ENCODE measurements at regions of chr7 and their contacts with region 1.

Region 1: DNA sequence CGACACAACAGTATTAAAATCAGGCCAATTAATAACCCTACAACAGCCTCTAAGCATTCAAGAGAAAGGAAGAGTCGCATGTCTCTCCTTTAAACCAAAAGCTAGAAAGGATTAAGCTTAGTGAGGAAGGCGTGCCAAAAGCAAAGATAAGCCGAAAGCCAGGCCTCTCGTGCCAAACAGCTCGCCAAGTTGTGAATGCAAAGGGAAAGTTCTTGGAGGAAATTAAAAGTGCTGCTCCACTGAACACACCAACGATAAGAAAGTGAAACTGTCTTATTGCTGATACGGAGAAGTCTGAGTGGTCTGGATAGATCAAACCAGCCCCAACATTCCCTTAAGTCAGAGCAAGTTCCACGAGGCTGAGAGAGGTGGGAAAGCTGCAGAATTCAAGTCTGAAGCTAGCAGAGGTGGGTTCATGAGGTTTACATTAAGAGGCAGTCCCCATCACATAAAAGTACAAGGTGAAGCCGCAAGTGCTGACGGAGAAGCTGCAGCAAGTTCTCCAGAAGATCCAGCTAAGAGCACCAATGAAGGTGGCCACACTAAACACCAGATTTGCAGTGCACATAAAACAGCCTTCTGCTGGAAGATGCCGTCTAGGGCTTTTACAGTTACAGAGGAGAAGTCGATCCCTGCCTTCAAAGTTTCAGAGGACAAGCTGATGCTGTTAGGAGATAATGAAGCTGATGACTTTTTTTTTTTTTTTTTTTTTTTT is 194.8 kb downstream of the MAD1L1 start:
- DNase-seq: peak in 7 of 14 experiments; percentile 14 to 57 (median 31)
- ATAC-seq: peak; percentile 41
- H3K4me3 ChIP-seq: peak overlapping the region; percentile 65
- H3K4me3 Mint-ChIP-seq: peak overlapping the region; percentile 80
- H3K27ac ChIP-seq: peak overlapping the region; percentile 23 to 58
- H3K27ac Mint-ChIP-seq: peak overlapping the region; percentile 86
- H3K4me1 ChIP-seq: peaks cover 34% of the 10 kb centered on the region
- H3K4me1 Mint-ChIP-seq: peaks cover 66% of the 10 kb centered on the region
- H3K27me3 ChIP-seq: no peaks in the 10 kb centered on the region
- H3K27me3 Mint-ChIP-seq: no peaks in the 10 kb centered on the region
- CTCF ChIP-seq: no peak

Region 2: GRCh38 chr7:1979591-1980560 is 58.1 kb before region 1 on chr7:
- CTCF ChIA-PET with region 1: no interaction called
- POLR2A ChIA-PET with region 1: interaction called, 3 read pairs
- intact Hi-C with region 1: loop called in 1 of 2 experiments (anchors 10 kb)
- DNase-seq: no peak
- ATAC-seq: no peak
- H3K4me3 ChIP-seq: no peak overlapping the region
- H3K4me3 Mint-ChIP-seq: no peak overlapping the region
- H3K27ac ChIP-seq: no peak overlapping the region
- H3K27ac Mint-ChIP-seq: no peak overlapping the region
- H3K4me1 ChIP-seq: peaks cover 4% of the 10 kb centered on the region
- H3K4me1 Mint-ChIP-seq: peaks cover 29% of the 10 kb centered on the region
- H3K27me3 ChIP-seq: no peaks in the 10 kb centered on the region
- H3K27me3 Mint-ChIP-seq: no peaks in the 10 kb centered on the region
- CTCF ChIP-seq: no peak

Region 3: GRCh38 chr7:2019607-2020511 is 18.1 kb before region 1 on chr7:
- CTCF ChIA-PET with region 1: no interaction called
- POLR2A ChIA-PET with region 1: interaction called, 5 read pairs
- intact Hi-C with region 1: loop called in 1 of 2 experiments (anchors 1 kb)
- DNase-seq: peak in 9 of 14 experiments; percentile 13 to 77 (median 49)
- ATAC-seq: peak; percentile 91
- H3K4me3 ChIP-seq: peak overlapping the region; percentile 24
- H3K4me3 Mint-ChIP-seq: peak overlapping the region; percentile 49
- H3K27ac ChIP-seq: peak overlapping the region in 1 of 2 donors; percentile 51
- H3K27ac Mint-ChIP-seq: peak overlapping the region; percentile 81
- H3K4me1 ChIP-seq: peaks cover 15% of the 10 kb centered on the region
- H3K4me1 Mint-ChIP-seq: peaks cover 17% of the 10 kb centered on the region
- H3K27me3 ChIP-seq: no peaks in the 10 kb centered on the region
- H3K27me3 Mint-ChIP-seq: no peaks in the 10 kb centered on the region
- CTCF ChIP-seq: no peak

Measured in CD4-positive, alpha-beta T cell (primary cell).